Ascending aorta (tissue), 2 donors: ENCODE measurements at regions of chr9 and their contacts with region 1.

Region 1: DNA sequence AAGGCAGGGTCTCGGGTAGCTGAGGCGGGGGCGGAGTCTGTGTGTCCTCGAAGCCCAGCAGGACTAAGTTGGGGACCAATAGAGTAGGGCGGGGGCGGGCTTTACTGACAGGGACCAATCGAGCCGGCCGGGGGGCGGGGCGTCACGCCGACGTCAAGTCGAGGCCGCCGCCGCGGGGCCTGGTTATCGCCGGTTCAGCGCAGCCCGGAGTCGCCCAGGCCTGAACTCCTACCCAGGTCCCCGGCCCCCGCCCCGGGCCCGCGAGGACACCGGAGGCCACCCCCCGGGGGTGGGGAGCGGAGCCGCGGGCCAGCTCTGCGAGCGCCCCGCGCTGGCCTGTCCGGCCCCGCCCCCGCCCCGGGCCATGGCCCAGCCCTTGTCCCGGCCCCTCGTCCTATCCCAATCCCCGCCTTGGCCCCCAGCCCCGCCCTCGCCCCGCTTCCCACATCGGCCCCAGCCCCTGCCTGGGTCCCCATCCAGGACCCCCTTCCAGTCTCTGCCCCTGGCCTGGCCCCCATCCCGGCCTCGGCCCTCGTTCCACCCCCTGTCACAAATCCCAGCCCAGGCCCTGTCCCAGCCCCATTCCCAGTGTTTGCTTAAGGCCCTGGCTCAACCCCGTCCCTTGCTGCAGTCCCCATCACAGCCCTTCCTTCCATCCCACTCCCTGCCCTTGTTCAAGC is at the start of gene TMEM8B:
- DNase-seq: peak; percentile 90 to 98
- H3K4me3 ChIP-seq: peak within 1 kb of the TSS; percentile 75 to 96
- H3K27ac ChIP-seq: peak within 1 kb of the TSS; percentile 88 to 98
- H3K4me1 ChIP-seq: peaks cover 10 to 31% of the 10 kb centered on the region in 2 donors
- H3K27me3 ChIP-seq: no peaks in the 10 kb centered on the region
- CTCF ChIP-seq: no peak
- total RNA-seq, gene TMEM8B: 37.3 TPM

Region 2: GRCh38 chr9:35657546-35658136 is 171.6 kb before region 1 on chr9 and contains the start of gene RMRP:
- intact Hi-C with region 1: loop called (anchors 5 kb)
- DNase-seq: peak; percentile 90 to 99
- H3K4me3 ChIP-seq: peak within 1 kb of the TSS; percentile 88 to 99
- H3K27ac ChIP-seq: peak within 1 kb of the TSS; percentile 97 to 100
- H3K4me1 ChIP-seq: peaks cover 5 to 35% of the 10 kb centered on the region in 2 donors
- H3K27me3 ChIP-seq: no peaks in the 10 kb centered on the region
- CTCF ChIP-seq: peak; percentile 32 to 56 (median 34)
- total RNA-seq, gene RMRP: 17,070 TPM

Region 3: GRCh38 chr9:35756275-35757225 is 72.7 kb before region 1 on chr9:
- intact Hi-C with region 1: loop called (anchors 5 kb)
- DNase-seq: peak; percentile 47 to 86
- H3K4me3 ChIP-seq: peak overlapping the region; percentile 63 to 71
- H3K27ac ChIP-seq: peak overlapping the region; percentile 98
- H3K4me1 ChIP-seq: peaks cover 5 to 31% of the 10 kb centered on the region in 2 donors
- H3K27me3 ChIP-seq: no peaks in the 10 kb centered on the region
- CTCF ChIP-seq: peak; percentile 38 to 74 (median 70)

Region 4: DNA sequence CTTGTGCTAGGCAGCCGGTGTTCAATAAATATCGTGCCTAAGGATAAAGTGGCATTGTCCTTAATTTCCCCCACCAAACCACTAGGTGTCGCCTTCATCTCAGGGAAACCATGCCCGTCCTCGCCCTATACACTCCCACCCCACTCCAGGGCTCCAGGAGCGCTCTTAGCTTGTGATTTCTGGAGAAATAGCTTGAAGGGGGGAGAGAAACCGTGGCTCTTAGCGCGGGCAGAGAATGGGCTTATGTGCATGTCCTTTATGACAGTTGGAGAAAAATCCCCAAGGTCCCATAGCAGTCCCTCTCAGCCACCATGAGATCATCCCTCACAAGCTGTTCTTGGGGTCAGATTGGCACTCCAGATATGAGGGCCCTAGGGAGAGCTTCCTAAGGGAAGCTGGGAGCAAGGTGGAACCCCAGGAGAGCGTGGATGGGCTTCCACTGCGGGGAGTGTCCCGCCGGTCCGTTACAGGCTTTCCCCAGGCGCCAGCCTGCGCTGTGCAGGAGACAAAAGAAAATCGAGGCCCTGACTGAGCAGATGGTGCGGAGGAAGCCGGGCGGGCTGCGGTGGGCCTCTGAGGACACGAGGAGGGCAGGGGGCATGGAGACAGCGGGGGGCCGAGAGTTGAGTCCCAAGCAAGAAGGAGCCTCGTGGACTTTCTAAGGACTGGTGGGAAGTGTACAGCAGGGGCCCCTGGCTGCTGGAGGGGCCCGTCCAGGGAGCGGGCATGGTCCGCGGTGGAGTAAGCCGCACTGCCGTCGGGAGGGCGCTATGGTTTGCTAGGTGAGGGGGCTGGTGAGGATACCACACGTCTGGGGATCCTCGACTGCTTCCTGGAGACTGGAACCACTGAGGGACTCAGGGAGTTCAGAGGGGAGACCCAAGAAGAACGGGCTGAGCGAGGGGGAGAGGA is 38.6 kb before region 1 on chr9:
- intact Hi-C with region 1: loop called (anchors 1 kb)
- DNase-seq: peak in 1 of 2 donors; percentile 88
- H3K4me3 ChIP-seq: peak overlapping the region; percentile 64 to 87
- H3K27ac ChIP-seq: peak overlapping the region; percentile 81 to 87
- H3K4me1 ChIP-seq: peaks cover 5 to 28% of the 10 kb centered on the region in 2 donors
- H3K27me3 ChIP-seq: no peaks in the 10 kb centered on the region
- CTCF ChIP-seq: peak; percentile 76 to 90 (median 83)

Region 5: DNA sequence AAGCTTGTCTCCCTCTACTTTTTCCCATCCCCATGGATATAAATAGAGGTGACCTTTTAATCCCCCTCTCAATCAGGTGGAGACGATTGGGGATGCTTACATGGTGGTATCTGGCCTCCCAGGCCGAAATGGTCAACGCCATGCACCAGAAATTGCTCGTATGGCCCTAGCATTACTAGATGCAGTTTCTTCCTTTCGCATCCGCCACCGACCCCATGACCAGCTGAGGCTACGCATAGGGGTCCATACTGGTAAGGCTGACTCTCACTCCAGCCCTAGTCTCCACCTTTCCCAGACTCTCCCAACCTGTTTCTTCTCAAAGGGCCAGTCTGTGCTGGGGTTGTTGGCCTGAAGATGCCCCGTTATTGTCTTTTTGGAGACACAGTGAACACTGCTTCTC is 20.8 kb before region 1 on chr9:
- intact Hi-C with region 1: no loop called
- DNase-seq: peak in 1 of 2 donors; percentile 56
- H3K4me3 ChIP-seq: no peak overlapping the region
- H3K27ac ChIP-seq: no peak overlapping the region
- H3K4me1 ChIP-seq: peaks cover 3 to 19% of the 10 kb centered on the region in 2 donors
- H3K27me3 ChIP-seq: no peaks in the 10 kb centered on the region
- CTCF ChIP-seq: no peak

Region 6: DNA sequence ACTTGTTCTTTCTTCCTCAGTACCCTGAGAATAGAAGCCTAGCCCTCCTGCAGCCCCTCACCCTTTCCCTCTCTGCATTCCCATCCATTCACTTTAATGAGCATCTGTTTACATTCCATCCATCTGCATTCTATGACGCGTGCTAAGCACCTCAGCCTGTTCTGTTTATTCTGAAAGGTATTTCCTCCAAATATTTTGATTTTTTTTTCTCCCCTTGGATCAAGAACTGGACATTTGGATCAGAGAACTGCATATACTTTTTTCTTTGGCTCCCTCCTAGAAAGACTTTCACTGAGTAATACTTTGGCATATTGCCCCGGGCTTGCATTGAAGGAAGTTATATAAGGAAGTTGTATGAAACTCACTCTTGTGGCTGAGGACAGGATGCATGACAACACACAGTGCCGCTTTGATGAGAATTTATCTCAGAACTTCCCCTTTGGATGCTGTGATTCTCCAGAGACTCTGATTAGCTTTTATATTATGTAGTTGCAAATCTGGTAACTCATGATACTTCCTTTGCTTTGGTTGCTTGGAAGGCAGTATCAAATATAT is 15.6 kb after region 1 on chr9:
- intact Hi-C with region 1: loop called (anchors 2 kb)
- DNase-seq: peak in 1 of 2 donors; percentile 72
- H3K4me3 ChIP-seq: no peak overlapping the region
- H3K27ac ChIP-seq: peak overlapping the region; percentile 8 to 44
- H3K4me1 ChIP-seq: peaks cover 0 to 26% of the 10 kb centered on the region in 2 donors
- H3K27me3 ChIP-seq: no peaks in the 10 kb centered on the region
- CTCF ChIP-seq: no peak

Region 7: GRCh38 chr9:35882263-35882848 is 53.1 kb after region 1 on chr9:
- intact Hi-C with region 1: loop called (anchors 5 kb)
- DNase-seq: peak in 1 of 2 donors; percentile 90
- H3K4me3 ChIP-seq: no peak overlapping the region
- H3K27ac ChIP-seq: no peak overlapping the region
- H3K4me1 ChIP-seq: no peaks in the 10 kb centered on the region
- H3K27me3 ChIP-seq: no peaks in the 10 kb centered on the region
- CTCF ChIP-seq: peak; percentile 90 to 96 (median 91)

Region 8: GRCh38 chr9:36250079-36250478 is 420.9 kb after region 1 on chr9:
- intact Hi-C with region 1: no loop called
- DNase-seq: no peak
- H3K4me3 ChIP-seq: no peak overlapping the region
- H3K27ac ChIP-seq: no peak overlapping the region
- H3K4me1 ChIP-seq: peaks cover 0 to 9% of the 10 kb centered on the region in 2 donors
- H3K27me3 ChIP-seq: no peaks in the 10 kb centered on the region
- CTCF ChIP-seq: no peak